Mammary epithelial cell (primary cell): ENCODE measurements at regions of chr1 and their contacts with region 1.

Region 1: DNA sequence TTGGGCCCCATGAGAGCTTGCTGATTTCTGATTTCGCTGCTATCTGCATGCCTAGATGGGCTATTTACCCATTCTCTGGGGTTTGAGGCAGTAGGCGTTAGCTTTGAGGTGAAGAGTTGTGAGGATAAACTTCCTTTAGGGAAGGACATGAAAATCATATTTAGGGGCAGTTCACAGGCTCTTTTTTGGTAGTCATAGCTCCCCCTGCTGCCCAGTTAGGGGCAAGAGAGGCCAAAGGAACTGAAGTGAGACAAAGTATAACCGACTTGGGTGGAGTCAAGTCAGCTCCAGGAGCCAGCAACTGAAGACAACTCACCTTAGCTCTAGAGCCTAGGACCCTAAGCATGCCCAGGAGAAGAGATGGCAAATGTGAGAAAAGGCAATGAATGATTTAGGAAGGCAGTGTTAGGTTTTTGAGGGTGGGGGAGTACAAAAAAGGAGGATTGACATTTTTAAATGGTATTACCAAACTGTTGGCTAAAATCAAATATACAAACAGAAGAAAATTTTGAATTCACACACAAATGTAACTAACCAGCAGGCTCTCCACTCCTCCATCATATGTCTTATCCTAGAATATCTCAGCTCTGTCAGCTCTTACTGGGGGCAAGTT is 625.2 kb downstream of the LMO4 start:
- DNase-seq: peak; percentile 58
- H3K4me3 ChIP-seq: no peak overlapping the region
- H3K27ac ChIP-seq: no peak overlapping the region
- H3K4me1 ChIP-seq: peaks cover 8% of the 10 kb centered on the region
- H3K27me3 ChIP-seq: no peaks in the 10 kb centered on the region
- CTCF ChIP-seq: peak; percentile 67 to 80

Region 2: GRCh38 chr1:87131809-87132283 is 822.0 kb before region 1 on chr1:
- CTCF ChIA-PET with region 1: no interaction called
- dilution Hi-C with region 1: no loop called
- in situ Hi-C with region 1: loop called in 1 of 2 experiments (anchors 25 kb)
- intact Hi-C with region 1: loop called (anchors 1 kb)
- DNase-seq: peak; percentile 54
- H3K4me3 ChIP-seq: peak overlapping the region; percentile 4 to 63 (median 40)
- H3K27ac ChIP-seq: no peak overlapping the region
- H3K4me1 ChIP-seq: peaks cover 23% of the 10 kb centered on the region
- H3K27me3 ChIP-seq: no peaks in the 10 kb centered on the region
- CTCF ChIP-seq: peak; percentile 82 to 97

Region 3: DNA sequence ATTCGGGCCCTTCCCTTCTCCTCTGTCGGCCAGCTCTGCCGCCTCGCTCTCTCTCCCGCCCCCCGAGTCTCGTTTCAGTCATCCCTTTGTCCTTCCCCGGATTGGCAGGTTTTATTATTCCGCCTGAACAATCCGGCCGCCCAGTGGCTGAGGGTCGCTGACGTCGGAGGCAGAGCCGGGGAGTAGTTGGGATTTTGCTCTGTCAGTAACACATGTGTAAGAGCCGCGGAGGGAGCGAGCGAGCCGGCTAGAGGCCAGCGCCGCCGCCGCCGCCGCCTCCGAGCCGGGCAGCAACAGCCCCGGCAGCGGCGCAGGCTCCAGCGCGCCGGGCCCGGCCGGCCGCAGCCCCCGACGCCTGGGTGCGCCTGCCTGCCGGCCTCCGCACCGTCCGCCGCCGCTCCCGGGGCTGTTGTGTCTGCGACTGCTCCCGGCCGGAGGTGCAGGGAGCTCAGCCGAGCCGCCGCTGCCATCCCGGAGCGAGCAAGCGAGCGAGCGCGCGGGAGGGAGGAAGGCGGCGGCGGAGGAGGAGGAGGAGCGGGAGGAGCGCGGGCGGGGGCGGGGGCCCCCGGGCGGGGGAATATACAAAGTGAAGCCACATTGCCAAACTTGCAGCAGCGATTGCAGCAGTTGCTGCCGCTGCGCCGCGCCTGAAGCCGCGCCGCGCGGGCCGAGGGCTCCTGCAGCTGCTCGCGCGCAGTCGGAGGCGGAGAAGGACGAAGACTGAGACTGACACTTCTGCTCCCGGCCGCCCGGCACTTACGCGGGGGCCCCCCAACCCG is 625.4 kb before region 1 on chr1 and contains the start of gene LMO4:
- CTCF ChIA-PET with region 1: no interaction called
- dilution Hi-C with region 1: no loop called
- in situ Hi-C with region 1: loop called in 1 of 2 experiments (anchors 10 kb)
- intact Hi-C with region 1: loop called (anchors 1 kb)
- DNase-seq: peak; percentile 98
- H3K4me3 ChIP-seq: peak within 1 kb of the TSS; percentile 72 to 92 (median 82)
- H3K27ac ChIP-seq: peak within 1 kb of the TSS; percentile 83
- H3K4me1 ChIP-seq: peaks cover 16% of the 10 kb centered on the region
- H3K27me3 ChIP-seq: no peaks in the 10 kb centered on the region
- CTCF ChIP-seq: no peak
- total RNA-seq, gene LMO4: 40.2 to 44.7 TPM

Region 4: DNA sequence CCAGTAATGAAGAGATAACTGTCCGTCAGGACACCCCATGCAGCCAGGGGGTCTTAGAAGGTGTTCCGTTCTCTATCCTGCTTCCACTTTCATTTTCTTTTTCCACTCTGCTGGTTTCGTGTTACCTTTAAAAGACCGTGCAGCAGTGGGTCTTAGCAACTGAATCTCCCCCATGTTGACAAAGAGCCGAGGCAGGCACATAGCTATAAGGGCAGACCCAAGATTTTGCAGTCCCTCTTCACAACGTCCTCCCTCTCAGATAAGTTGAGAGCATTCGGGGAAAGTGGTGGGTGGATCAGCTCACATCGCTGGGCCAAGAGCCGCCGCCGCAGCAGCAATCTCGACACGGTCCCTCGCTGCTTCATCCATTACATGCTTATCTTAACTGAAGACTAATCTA is 269.6 kb before region 1 on chr1:
- CTCF ChIA-PET with region 1: no interaction called
- dilution Hi-C with region 1: no loop called
- in situ Hi-C with region 1: no loop called
- intact Hi-C with region 1: loop called (anchors 10 kb)
- DNase-seq: no peak
- H3K4me3 ChIP-seq: no peak overlapping the region
- H3K27ac ChIP-seq: no peak overlapping the region
- H3K4me1 ChIP-seq: no peaks in the 10 kb centered on the region
- H3K27me3 ChIP-seq: no peaks in the 10 kb centered on the region
- CTCF ChIP-seq: no peak

Region 5: GRCh38 chr1:87869567-87869966 is 84.3 kb before region 1 on chr1:
- CTCF ChIA-PET with region 1: no interaction called
- dilution Hi-C with region 1: no loop called
- in situ Hi-C with region 1: no loop called
- intact Hi-C with region 1: loop called (anchors 5 kb)
- DNase-seq: peak; percentile 84
- H3K4me3 ChIP-seq: no peak overlapping the region
- H3K27ac ChIP-seq: peak overlapping the region; percentile 27
- H3K4me1 ChIP-seq: peaks cover 4% of the 10 kb centered on the region
- H3K27me3 ChIP-seq: no peaks in the 10 kb centered on the region
- CTCF ChIP-seq: no peak